CD8-positive, alpha-beta T cell (primary cell): ENCODE measurements at regions of chr10 and their contacts with region 1.

Region 1: GRCh38 chr10:31083765-31084184 is 52.1 kb upstream of the ZNF438 start:
- DNase-seq: peak; percentile 19 to 73 (median 50)
- ATAC-seq: peak; percentile 75
- H3K4me3 ChIP-seq: no peak overlapping the region
- H3K4me3 Mint-ChIP-seq: no peak overlapping the region
- H3K27ac ChIP-seq: no peak overlapping the region
- H3K27ac Mint-ChIP-seq: no peak overlapping the region
- H3K4me1 ChIP-seq: no peaks in the 10 kb centered on the region
- H3K4me1 Mint-ChIP-seq: peaks cover 4% of the 10 kb centered on the region
- H3K27me3 ChIP-seq: no peaks in the 10 kb centered on the region
- H3K27me3 Mint-ChIP-seq: no peaks in the 10 kb centered on the region
- CTCF ChIP-seq: no peak

Region 2: GRCh38 chr10:29946614-29946952 is 1137.2 kb before region 1 on chr10:
- CTCF ChIA-PET with region 1: no interaction called
- POLR2A ChIA-PET with region 1: no interaction called
- intact Hi-C with region 1: no loop called
- DNase-seq: no peak
- ATAC-seq: no peak
- H3K4me3 ChIP-seq: no peak overlapping the region
- H3K4me3 Mint-ChIP-seq: no peak overlapping the region
- H3K27ac ChIP-seq: no peak overlapping the region
- H3K27ac Mint-ChIP-seq: no peak overlapping the region
- H3K4me1 ChIP-seq: no peaks in the 10 kb centered on the region
- H3K4me1 Mint-ChIP-seq: no peaks in the 10 kb centered on the region
- H3K27me3 ChIP-seq: no peaks in the 10 kb centered on the region
- H3K27me3 Mint-ChIP-seq: peaks cover 5% of the 10 kb centered on the region
- CTCF ChIP-seq: no peak

Region 3: DNA sequence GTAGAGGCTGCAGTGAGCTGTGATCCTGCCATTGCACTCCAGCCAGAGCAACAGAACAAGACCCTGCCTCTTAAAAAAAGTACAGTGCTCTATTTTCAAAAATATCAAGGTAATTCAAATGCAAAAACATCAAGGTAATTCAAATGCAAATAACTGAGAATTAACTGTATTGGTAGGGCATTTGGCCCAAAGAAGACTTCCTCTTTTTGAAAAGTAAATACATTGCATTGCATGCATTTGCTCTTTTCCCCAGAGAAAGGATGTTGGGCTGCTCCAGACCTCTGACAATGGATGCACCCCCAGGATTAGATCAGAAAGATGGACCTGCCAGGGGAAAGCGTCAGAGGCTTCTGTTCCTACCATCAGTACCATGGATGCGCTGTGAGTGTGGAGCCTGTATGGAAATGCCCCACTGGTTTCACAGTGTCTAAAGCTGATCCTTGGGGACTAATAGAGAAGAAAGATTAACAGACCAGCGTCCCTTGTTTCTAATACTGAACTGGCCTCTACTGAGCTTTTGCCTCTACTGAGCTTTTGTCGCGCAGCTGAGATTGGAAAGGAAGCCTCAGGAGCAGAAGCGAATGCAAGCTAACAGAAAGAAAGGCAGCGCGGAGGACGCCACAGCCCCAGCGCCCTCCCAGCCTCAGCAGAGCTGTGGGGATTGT is 360.7 kb before region 1 on chr10:
- CTCF ChIA-PET with region 1: no interaction called
- POLR2A ChIA-PET with region 1: no interaction called
- intact Hi-C with region 1: no loop called
- DNase-seq: no peak
- ATAC-seq: no peak
- H3K4me3 ChIP-seq: no peak overlapping the region
- H3K4me3 Mint-ChIP-seq: no peak overlapping the region
- H3K27ac ChIP-seq: no peak overlapping the region
- H3K27ac Mint-ChIP-seq: no peak overlapping the region
- H3K4me1 ChIP-seq: peaks cover 3% of the 10 kb centered on the region
- H3K4me1 Mint-ChIP-seq: no peaks in the 10 kb centered on the region
- H3K27me3 ChIP-seq: no peaks in the 10 kb centered on the region
- H3K27me3 Mint-ChIP-seq: no peaks in the 10 kb centered on the region
- CTCF ChIP-seq: no peak

Region 4: GRCh38 chr10:30736685-30737232 is 347.0 kb before region 1 on chr10:
- CTCF ChIA-PET with region 1: no interaction called
- POLR2A ChIA-PET with region 1: no interaction called
- intact Hi-C with region 1: no loop called
- DNase-seq: no peak
- ATAC-seq: no peak
- H3K4me3 ChIP-seq: no peak overlapping the region
- H3K4me3 Mint-ChIP-seq: no peak overlapping the region
- H3K27ac ChIP-seq: no peak overlapping the region
- H3K27ac Mint-ChIP-seq: no peak overlapping the region
- H3K4me1 ChIP-seq: no peaks in the 10 kb centered on the region
- H3K4me1 Mint-ChIP-seq: no peaks in the 10 kb centered on the region
- H3K27me3 ChIP-seq: no peaks in the 10 kb centered on the region
- H3K27me3 Mint-ChIP-seq: peaks cover 6% of the 10 kb centered on the region
- CTCF ChIP-seq: no peak

Region 5: GRCh38 chr10:31353574-31353973 is 269.8 kb after region 1 on chr10:
- CTCF ChIA-PET with region 1: no interaction called
- POLR2A ChIA-PET with region 1: no interaction called
- intact Hi-C with region 1: loop called in 1 of 2 experiments (anchors 10 kb)
- DNase-seq: peak in 3 of 9 experiments; percentile 31 to 53 (median 39)
- ATAC-seq: peak; percentile 87
- H3K4me3 ChIP-seq: no peak overlapping the region
- H3K4me3 Mint-ChIP-seq: no peak overlapping the region
- H3K27ac ChIP-seq: no peak overlapping the region
- H3K27ac Mint-ChIP-seq: no peak overlapping the region
- H3K4me1 ChIP-seq: peaks cover 9% of the 10 kb centered on the region
- H3K4me1 Mint-ChIP-seq: peaks cover 63% of the 10 kb centered on the region
- H3K27me3 ChIP-seq: no peaks in the 10 kb centered on the region
- H3K27me3 Mint-ChIP-seq: no peaks in the 10 kb centered on the region
- CTCF ChIP-seq: no peak

Region 6: GRCh38 chr10:31490858-31491504 is 407.2 kb after region 1 on chr10:
- CTCF ChIA-PET with region 1: interaction called, 3 read pairs
- POLR2A ChIA-PET with region 1: no interaction called
- intact Hi-C with region 1: loop called (anchors 2 to 5 kb)
- DNase-seq: peak in 3 of 9 experiments; percentile 16 to 61 (median 47)
- ATAC-seq: peak; percentile 62
- H3K4me3 ChIP-seq: no peak overlapping the region
- H3K4me3 Mint-ChIP-seq: no peak overlapping the region
- H3K27ac ChIP-seq: no peak overlapping the region
- H3K27ac Mint-ChIP-seq: no peak overlapping the region
- H3K4me1 ChIP-seq: no peaks in the 10 kb centered on the region
- H3K4me1 Mint-ChIP-seq: peaks cover 4% of the 10 kb centered on the region
- H3K27me3 ChIP-seq: no peaks in the 10 kb centered on the region
- H3K27me3 Mint-ChIP-seq: no peaks in the 10 kb centered on the region
- CTCF ChIP-seq: peak; percentile 33

Region 7: DNA sequence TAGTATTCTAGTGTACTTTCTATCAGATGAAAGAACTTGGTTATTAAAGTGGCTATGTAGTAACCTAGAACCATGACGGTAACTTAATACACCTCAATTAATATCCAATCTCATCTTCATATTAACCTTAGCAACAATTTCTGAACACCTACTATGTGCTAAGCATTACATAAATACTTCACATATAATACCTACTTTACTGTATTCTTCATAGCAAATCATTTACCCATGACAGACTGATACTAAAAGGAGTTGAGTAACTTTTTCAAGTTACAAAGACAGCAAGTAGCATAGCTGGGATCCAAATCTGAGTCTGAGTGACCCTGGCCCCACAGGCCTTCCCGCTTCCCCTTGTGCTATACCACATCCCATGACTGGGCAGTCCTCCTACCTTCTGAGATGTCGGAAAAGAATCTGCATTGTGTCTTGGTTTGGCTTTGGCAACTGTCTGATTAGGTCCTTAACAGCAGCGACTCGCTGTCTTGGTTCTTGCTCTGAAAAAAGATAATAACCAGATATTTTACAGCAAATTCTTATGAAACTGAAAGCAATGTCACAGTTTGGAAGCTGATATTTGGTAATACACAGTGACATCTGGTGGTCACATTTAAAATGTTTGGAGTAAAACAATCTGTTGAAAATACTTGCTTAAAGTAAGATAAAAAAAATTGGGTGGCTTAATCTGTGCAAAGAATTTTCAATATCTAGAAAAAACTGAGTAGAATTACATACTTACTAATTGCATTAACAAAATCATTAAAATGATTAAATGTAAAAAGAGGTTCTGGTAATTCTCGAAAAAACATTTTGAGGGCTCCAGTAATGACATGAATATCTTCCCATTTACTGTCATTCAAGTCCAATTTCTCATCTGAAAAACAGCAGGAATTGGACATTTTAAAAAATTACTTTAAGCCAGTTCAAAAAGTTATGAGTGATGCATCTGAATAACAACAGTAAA is 724.8 kb after region 1 on chr10:
- CTCF ChIA-PET with region 1: interaction called, 4 read pairs
- POLR2A ChIA-PET with region 1: no interaction called
- intact Hi-C with region 1: loop called (anchors 2 kb)
- DNase-seq: peak in 4 of 9 experiments; percentile 4 to 74 (median 39)
- ATAC-seq: peak; percentile 57
- H3K4me3 ChIP-seq: no peak overlapping the region
- H3K4me3 Mint-ChIP-seq: no peak overlapping the region
- H3K27ac ChIP-seq: no peak overlapping the region
- H3K27ac Mint-ChIP-seq: peak overlapping the region; percentile 83
- H3K4me1 ChIP-seq: no peaks in the 10 kb centered on the region
- H3K4me1 Mint-ChIP-seq: peaks cover 4% of the 10 kb centered on the region
- H3K27me3 ChIP-seq: no peaks in the 10 kb centered on the region
- H3K27me3 Mint-ChIP-seq: no peaks in the 10 kb centered on the region
- CTCF ChIP-seq: peak; percentile 64